Transverse colon (tissue), 4 donors: ENCODE measurements at regions of chr5 and their contacts with region 1.

Region 1: DNA sequence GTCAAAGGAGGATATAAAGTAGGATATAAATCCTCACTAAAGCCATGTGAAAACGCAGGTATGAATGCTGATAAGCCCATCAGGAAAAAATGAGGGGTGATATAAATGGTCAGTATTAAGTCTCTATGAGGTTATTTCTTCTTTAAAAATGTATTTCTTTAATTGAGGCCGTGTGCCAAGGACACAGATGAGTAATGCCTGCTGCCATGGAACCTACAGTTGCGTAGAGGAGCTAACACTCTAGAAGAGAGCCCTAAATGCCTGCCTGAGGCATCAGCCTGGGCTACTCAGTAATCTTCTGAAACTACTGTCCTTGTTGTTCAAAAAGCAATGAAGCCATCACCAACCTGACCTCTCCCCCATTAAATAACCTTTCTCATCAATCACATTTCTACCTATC is 84.9 kb downstream of the KLHL3 start:
- DNase-seq: no peak
- H3K4me3 ChIP-seq: no peak overlapping the region
- H3K27ac ChIP-seq: no peak overlapping the region
- H3K4me1 ChIP-seq: no peaks in the 10 kb centered on the region
- H3K27me3 ChIP-seq: no peaks in the 10 kb centered on the region
- CTCF ChIP-seq: no peak
- EP300 ChIP-seq: no peak
- POLR2A ChIP-seq: no peak

Region 2: DNA sequence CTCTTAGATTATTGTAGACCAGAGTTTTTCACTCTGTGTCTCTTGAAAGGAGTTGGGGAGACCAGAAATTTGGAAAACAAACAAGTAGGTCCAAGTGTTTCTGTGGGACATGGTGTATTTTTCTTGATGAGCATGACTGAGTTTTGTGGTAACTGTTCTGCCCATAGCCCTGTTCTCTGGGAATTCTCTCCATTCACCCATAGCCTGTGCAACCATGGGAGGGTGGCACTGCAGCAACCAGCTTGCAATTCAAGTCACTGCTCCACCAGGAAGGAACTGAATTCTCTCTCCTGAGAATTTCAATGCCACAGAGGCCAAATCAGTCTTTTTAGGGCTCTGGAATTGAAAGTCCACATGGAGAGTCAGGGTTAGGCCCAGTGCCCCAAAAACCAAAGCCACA is 810.4 kb before region 1 on chr5:
- in situ Hi-C with region 1: no loop called
- intact Hi-C with region 1: no loop called
- DNase-seq: no peak
- H3K4me3 ChIP-seq: no peak overlapping the region
- H3K27ac ChIP-seq: no peak overlapping the region
- H3K4me1 ChIP-seq: no peaks in the 10 kb centered on the region
- H3K27me3 ChIP-seq: no peaks in the 10 kb centered on the region
- CTCF ChIP-seq: no peak
- EP300 ChIP-seq: no peak
- POLR2A ChIP-seq: no peak

Region 3: DNA sequence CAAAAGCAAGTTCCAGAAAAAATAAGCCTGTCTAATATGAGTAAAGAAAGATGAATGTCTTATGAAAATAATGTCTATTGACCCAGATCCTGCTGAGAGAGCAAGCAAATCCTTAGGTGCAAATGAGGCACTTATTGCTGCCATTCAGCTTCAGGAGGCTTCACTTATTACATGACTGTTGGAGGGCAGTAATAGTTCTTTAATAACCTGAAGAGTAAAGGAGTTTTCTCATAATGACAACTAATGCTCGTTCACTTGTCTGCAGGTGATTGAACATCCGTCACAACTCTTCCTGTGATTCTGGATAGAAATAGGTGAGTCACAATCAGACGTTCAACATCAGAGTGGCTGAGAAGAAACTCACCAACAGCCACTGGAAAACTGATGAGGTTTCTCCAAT is 210.2 kb before region 1 on chr5:
- in situ Hi-C with region 1: no loop called
- intact Hi-C with region 1: no loop called
- DNase-seq: no peak
- H3K4me3 ChIP-seq: no peak overlapping the region
- H3K27ac ChIP-seq: no peak overlapping the region
- H3K4me1 ChIP-seq: no peaks in the 10 kb centered on the region
- H3K27me3 ChIP-seq: no peaks in the 10 kb centered on the region
- CTCF ChIP-seq: no peak
- EP300 ChIP-seq: no peak
- POLR2A ChIP-seq: no peak

Region 4: DNA sequence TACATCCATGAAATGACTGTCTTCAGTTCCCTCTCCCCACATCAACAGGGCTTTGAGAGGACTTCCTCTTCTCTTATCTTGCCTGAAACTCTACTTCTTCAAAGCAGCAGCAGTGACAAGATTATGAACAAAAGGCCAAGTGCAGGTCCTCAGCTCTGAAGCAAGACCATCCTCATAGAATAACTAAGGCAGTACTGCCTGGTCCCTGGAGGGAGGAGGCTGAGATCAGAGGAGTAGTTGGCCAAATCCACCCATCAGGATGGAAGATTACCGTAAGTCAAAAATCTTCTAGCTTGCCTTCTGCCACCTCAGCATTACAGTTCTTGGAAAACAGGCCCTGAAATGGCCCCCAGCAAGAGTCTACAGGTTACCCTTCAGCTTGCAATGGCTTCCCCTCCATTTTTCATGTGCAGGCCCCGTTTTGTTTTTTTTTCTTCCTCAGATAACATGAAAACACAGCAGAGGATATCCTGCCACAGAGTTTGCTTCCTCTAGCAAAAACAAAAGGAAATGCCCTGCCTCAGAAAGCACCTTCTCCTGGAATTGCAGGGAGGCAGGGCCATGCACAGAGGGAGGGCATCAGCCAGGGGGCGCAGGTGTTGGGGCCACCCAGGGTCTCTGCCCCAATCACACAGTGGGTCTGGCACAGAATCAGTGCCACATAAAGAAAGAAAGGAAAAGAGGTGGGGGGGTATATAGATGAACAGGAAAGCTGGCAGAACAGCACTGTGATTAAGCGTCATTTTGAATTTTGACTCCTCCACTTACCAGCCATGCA is 44.8 kb after region 1 on chr5:
- in situ Hi-C with region 1: no loop called
- intact Hi-C with region 1: no loop called
- DNase-seq: no peak
- H3K4me3 ChIP-seq: no peak overlapping the region
- H3K27ac ChIP-seq: peak overlapping the region in 2 of 4 donors; percentile 7 to 33
- H3K4me1 ChIP-seq: peaks cover 0 to 6% (median 0%) of the 10 kb centered on the region in 4 donors
- H3K27me3 ChIP-seq: no peaks in the 10 kb centered on the region
- CTCF ChIP-seq: no peak
- EP300 ChIP-seq: no peak
- POLR2A ChIP-seq: no peak

Region 5: DNA sequence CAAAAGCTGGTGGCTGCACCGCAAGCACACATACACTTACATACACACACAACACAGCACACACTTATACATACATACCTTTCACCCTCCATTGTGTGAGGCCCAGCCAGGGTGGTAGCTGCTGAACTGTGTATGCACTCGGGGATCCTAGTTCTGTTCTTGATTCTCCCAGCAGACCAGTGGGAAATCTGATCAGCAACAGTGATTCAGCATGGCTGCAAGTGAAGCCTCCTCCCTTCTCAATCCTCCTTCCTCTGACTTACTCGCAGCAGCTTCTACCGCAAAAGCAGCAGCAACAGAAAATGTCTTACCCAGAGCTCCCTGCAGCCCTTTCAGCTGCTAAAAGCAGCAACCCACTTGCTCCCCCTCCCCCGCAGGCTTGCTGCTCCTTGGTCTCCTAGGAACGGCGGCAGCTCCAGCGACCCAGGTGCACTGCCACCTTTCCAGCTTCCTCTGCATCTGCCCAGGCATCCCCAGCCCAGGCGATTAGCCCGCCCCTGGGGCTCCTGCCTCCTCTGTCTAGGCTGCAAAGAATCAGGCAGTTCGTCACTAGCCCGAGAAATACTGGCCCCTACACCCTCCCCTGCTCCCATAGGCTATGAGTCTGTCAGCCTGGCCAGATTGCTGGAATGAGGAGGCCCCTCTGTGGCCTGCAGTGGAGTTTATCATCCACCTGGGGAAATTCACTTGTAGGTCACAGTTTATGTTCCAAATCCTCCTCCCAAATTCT is 84.7 kb after region 1 on chr5 and contains the start of gene KLHL3:
- in situ Hi-C with region 1: loop called in 3 of 4 experiments (anchors 10 to 25 kb)
- intact Hi-C with region 1: no loop called
- DNase-seq: peak; percentile 41
- H3K4me3 ChIP-seq: peak within 1 kb of the TSS; percentile 8 to 41 (median 26)
- H3K27ac ChIP-seq: peak within 1 kb of the TSS; percentile 13 to 65 (median 56)
- H3K4me1 ChIP-seq: peaks cover 0 to 34% (median 15%) of the 10 kb centered on the region in 4 donors
- H3K27me3 ChIP-seq: no peaks in the 10 kb centered on the region
- CTCF ChIP-seq: peak in 1 of 5 experiments; percentile 26
- EP300 ChIP-seq: no peak
- POLR2A ChIP-seq: no peak
- total RNA-seq, gene KLHL3: 0.75 to 4.4 (median 2.6) TPM

Region 6: GRCh38 chr5:137743031-137743640 is 92.1 kb after region 1 on chr5:
- in situ Hi-C with region 1: loop called in 3 of 4 experiments (anchors 10 to 25 kb)
- intact Hi-C with region 1: no loop called
- DNase-seq: peak; percentile 41
- H3K4me3 ChIP-seq: no peak overlapping the region
- H3K27ac ChIP-seq: no peak overlapping the region
- H3K4me1 ChIP-seq: peaks cover 0 to 3% (median 0%) of the 10 kb centered on the region in 4 donors
- H3K27me3 ChIP-seq: no peaks in the 10 kb centered on the region
- CTCF ChIP-seq: peak; percentile 55 to 65 (median 61)
- EP300 ChIP-seq: no peak
- POLR2A ChIP-seq: no peak

Region 7: DNA sequence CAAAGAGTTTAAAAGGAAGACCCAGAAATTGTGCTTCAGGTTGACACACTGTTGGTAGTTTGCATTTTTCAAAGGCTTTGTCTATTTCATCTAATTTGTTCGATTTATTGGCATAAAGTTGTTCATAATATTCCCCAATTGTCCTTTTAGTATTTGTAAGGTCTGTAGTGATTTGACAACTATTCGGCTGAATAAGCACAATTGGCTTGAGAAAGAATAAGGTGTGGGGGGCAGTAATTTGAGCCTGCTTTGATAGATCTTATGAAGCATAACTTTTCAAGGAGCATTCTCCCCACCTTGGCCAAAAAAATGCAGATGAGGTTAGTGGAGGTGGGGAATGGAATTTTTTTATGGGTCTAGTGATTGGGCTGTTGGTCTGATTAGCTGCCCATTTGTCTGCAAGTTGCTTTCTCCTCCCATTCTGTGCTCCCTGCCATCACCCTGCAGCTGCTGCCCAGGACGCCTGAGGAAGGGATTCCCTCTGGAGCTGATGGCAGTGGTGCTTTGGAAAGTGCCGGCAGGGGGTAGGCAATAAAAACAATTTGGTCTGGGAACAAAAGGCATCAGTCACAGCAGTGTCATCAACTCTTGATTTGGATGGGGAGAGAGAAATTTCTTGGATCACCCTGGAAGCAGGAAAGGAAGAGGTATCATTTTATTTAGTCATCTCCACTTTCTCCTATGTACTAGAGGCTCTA is 459.4 kb after region 1 on chr5:
- in situ Hi-C with region 1: no loop called
- intact Hi-C with region 1: loop called (anchors 10 kb)
- DNase-seq: no peak
- H3K4me3 ChIP-seq: no peak overlapping the region
- H3K27ac ChIP-seq: no peak overlapping the region
- H3K4me1 ChIP-seq: peaks cover 0 to 3% (median 0%) of the 10 kb centered on the region in 4 donors
- H3K27me3 ChIP-seq: peaks cover 5% of the 10 kb centered on the region
- CTCF ChIP-seq: no peak
- EP300 ChIP-seq: no peak
- POLR2A ChIP-seq: no peak